ENCODE measurements at regions of chr4 and their contacts with region 1.

Region 1: DNA sequence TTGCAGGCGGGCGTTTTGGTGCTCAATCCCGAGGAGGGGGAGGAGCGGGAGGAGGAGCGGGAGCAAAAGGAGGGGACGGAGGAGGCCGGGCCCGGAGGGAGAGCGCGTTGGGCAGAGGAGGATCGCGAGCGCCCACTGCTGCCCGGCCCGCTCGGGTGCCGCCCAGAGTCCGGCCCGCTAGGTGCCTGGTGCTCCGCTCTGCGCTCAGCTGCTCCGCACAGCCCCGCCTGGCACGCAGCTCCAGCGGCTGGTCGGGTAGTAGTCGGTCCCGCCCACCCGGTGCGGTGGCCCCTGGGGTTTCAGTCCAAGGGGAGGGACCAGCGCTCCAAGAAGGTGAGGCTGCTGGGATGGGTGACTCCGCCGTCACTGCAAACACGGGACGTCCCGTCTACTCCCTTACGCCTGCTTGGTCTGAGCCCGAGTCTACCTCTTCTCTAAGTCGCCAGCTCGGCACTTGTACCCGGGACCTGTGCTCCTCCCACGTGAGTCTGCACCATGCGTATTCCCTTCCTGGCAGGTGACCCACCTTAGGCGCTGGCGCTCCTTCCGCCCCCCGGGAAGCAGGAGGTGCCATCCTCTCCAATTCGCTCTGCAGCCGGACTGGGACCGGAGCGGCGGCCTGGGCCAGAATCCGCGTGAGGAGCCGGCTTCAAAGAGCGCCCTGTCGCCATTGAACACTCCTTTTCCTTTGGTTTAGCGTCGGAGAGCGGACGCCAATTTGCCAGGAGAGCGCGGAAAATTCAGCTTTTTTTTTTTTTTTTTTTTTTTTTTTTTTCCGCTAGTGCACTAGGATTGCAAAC is 405 bp upstream of the HS3ST1 start:
- DNase-seq: peak; percentile 58
- H3K4me3 Mint-ChIP-seq: peak overlapping the region; percentile 54
- H3K27ac Mint-ChIP-seq: no peak overlapping the region
- H3K4me1 Mint-ChIP-seq: peaks cover 12% of the 10 kb centered on the region
- H3K27me3 Mint-ChIP-seq: peaks cover 51% of the 10 kb centered on the region

Region 2: GRCh38 chr4:11355224-11355623 is 73.9 kb before region 1 on chr4:
- CTCF ChIA-PET with region 1: no interaction called
- POLR2A ChIA-PET with region 1: no interaction called
- intact Hi-C with region 1: no loop called
- DNase-seq: no peak
- H3K4me3 Mint-ChIP-seq: no peak overlapping the region
- H3K27ac Mint-ChIP-seq: no peak overlapping the region
- H3K4me1 Mint-ChIP-seq: no peaks in the 10 kb centered on the region
- H3K27me3 Mint-ChIP-seq: no peaks in the 10 kb centered on the region

Region 3: GRCh38 chr4:11505221-11505971 is 76.3 kb after region 1 on chr4:
- CTCF ChIA-PET with region 1: no interaction called
- POLR2A ChIA-PET with region 1: no interaction called
- intact Hi-C with region 1: no loop called
- DNase-seq: peak; percentile 51
- H3K4me3 Mint-ChIP-seq: no peak overlapping the region
- H3K27ac Mint-ChIP-seq: peak overlapping the region; percentile 50
- H3K4me1 Mint-ChIP-seq: peaks cover 20% of the 10 kb centered on the region
- H3K27me3 Mint-ChIP-seq: no peaks in the 10 kb centered on the region

Region 4: DNA sequence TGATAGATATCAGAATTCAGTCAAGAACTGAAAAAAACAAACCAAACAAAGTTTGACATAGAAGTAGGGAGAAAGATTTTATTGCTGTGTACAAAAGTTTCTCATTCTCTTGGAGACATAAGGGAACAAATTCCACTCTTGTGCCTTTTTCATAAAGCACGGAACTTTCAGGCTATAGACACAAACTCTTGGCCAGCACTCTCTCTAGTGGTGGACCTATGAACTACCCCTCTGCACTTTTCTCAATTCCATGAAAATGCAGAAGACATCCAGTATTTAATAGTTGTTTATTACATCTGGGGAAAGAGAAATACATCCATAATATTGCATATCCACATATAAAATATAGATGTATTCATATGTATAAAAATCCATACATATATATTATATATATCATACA is 291.2 kb after region 1 on chr4:
- CTCF ChIA-PET with region 1: no interaction called
- POLR2A ChIA-PET with region 1: no interaction called
- intact Hi-C with region 1: loop called (anchors 10 kb)
- DNase-seq: no peak
- H3K4me3 Mint-ChIP-seq: no peak overlapping the region
- H3K27ac Mint-ChIP-seq: no peak overlapping the region
- H3K4me1 Mint-ChIP-seq: no peaks in the 10 kb centered on the region
- H3K27me3 Mint-ChIP-seq: peaks cover 5% of the 10 kb centered on the region